ENCODE measurements at regions of chr20 and their contacts with region 1.

Region 1: DNA sequence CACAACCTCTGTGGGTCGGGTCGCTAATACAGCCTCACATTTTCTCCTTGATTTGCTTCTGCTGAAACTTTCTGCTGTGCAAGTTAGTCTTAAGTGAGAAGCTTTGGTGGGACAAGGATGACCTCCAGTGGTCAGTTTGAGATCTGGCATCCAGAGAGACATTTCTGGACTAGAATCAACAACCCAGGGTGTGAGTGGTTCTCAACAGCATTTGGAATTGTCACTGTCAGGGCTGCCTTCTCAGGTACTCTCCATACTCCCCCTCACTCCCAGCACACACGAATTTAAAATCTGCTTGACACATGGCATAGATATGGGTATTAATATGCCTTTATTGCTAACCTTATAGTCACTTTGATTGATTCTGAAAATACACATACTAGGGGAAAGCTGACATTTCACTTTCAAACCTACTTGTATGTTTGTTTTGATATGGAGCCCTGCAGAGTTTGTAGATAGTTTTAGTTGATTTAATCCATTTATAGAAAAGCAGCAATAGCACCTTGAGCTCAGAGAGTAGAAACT is 13.2 kb downstream of the OTOR start:
- DNase-seq: peak in 1 of 2 donors; percentile 38
- ATAC-seq: peak in 7 of 8 donors; percentile 55 to 82 (median 75)
- H3K4me3 ChIP-seq: no peak overlapping the region
- H3K27ac ChIP-seq: no peak overlapping the region
- H3K4me1 ChIP-seq: peaks cover 0 to 8% (median 0%) of the 10 kb centered on the region in 9 donors
- H3K27me3 ChIP-seq: peaks cover 0 to 18% (median 7%) of the 10 kb centered on the region in 7 donors
- CTCF ChIP-seq: peak; percentile 36 to 78 (median 70)

Region 2: GRCh38 chr20:16621435-16622141 is 139.8 kb before region 1 on chr20:
- intact Hi-C with region 1: no loop called
- DNase-seq: no peak
- ATAC-seq: no peak
- H3K4me3 ChIP-seq: no peak overlapping the region
- H3K27ac ChIP-seq: no peak overlapping the region
- H3K4me1 ChIP-seq: no peaks in the 10 kb centered on the region
- H3K27me3 ChIP-seq: no peaks in the 10 kb centered on the region
- CTCF ChIP-seq: no peak

Region 3: GRCh38 chr20:16701296-16701695 is 60.1 kb before region 1 on chr20:
- intact Hi-C with region 1: loop called in 2 of 10 experiments (anchors 5 to 10 kb)
- DNase-seq: no peak
- ATAC-seq: no peak
- H3K4me3 ChIP-seq: no peak overlapping the region
- H3K27ac ChIP-seq: no peak overlapping the region
- H3K4me1 ChIP-seq: no peaks in the 10 kb centered on the region
- H3K27me3 ChIP-seq: peaks cover 0 to 10% (median 0%) of the 10 kb centered on the region in 7 donors
- CTCF ChIP-seq: peak in 6 of 9 donors; percentile 23 to 40 (median 30)

Region 4: GRCh38 chr20:16975682-16976081 is 214.3 kb after region 1 on chr20:
- intact Hi-C with region 1: no loop called
- DNase-seq: no peak
- ATAC-seq: no peak
- H3K4me3 ChIP-seq: no peak overlapping the region
- H3K27ac ChIP-seq: no peak overlapping the region
- H3K4me1 ChIP-seq: no peaks in the 10 kb centered on the region
- H3K27me3 ChIP-seq: no peaks in the 10 kb centered on the region
- CTCF ChIP-seq: no peak

Measured in heart right ventricle (tissue), 16 donors.